ENCODE measurements at regions of chr16 and their contacts with region 1.

Region 1: GRCh38 chr16:15961060-15961511 is 11.7 kb downstream of the ABCC1 start:
- DNase-seq: peak; percentile 86 to 94 (median 89)
- H3K4me3 ChIP-seq: peak overlapping the region; percentile 33 to 55
- H3K4me3 Mint-ChIP-seq: peak overlapping the region; percentile 81 to 93 (median 88)
- H3K27ac ChIP-seq: peak overlapping the region; percentile 96
- H3K27ac Mint-ChIP-seq: peak overlapping the region; percentile 94 to 100 (median 99)
- H3K4me1 ChIP-seq: peaks cover 83% of the 10 kb centered on the region
- H3K4me1 Mint-ChIP-seq: peaks cover 56 to 86% (median 71%) of the 10 kb centered on the region in 4 donors
- H3K27me3 ChIP-seq: no peaks in the 10 kb centered on the region
- H3K27me3 Mint-ChIP-seq: no peaks in the 10 kb centered on the region

Region 2: GRCh38 chr16:15949210-15950160 is 11.6 kb before region 1 on chr16 and contains the start of gene ABCC1:
- CTCF ChIA-PET with region 1: interaction called, 7 read pairs
- POLR2A ChIA-PET with region 1: interaction called, 24 read pairs
- intact Hi-C with region 1: loop called (anchors 1 kb)
- DNase-seq: peak; percentile 49 to 78 (median 61)
- H3K4me3 ChIP-seq: peak within 1 kb of the TSS; percentile 76 to 92
- H3K4me3 Mint-ChIP-seq: peak within 1 kb of the TSS; percentile 94 to 98 (median 97)
- H3K27ac ChIP-seq: peak within 1 kb of the TSS; percentile 83
- H3K27ac Mint-ChIP-seq: peak within 1 kb of the TSS; percentile 94 to 100 (median 99)
- H3K4me1 ChIP-seq: peaks cover 46% of the 10 kb centered on the region
- H3K4me1 Mint-ChIP-seq: peaks cover 21 to 53% (median 39%) of the 10 kb centered on the region in 4 donors
- H3K27me3 ChIP-seq: no peaks in the 10 kb centered on the region
- H3K27me3 Mint-ChIP-seq: no peaks in the 10 kb centered on the region
- total RNA-seq, gene ABCC1: 57.3 to 69.9 TPM

Region 3: DNA sequence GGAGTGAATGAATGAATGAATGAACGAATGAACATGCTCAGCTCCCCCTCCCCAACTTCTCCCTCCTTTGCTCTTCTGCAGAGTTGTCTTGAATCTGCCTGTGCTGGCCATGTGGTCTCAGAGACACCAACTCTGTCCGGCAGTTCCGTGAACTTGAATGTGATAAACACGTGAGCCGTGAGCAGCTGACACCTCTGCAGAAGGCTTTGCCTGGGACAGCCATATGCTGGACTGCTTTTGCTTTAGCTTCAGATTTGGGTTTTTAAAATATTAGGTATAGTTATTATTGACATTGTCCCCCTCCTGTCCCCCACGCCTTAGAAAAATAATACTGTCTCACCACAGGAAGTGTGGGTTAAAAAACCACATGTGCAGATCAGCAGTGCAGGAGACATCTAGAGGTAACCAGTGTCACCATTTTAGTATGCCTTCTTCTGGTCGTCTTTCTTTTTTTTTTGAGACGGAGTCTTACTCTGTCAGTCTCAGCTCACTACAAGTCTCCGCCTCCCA is 72.2 kb after region 1 on chr16:
- CTCF ChIA-PET with region 1: no interaction called
- POLR2A ChIA-PET with region 1: interaction called, 3 read pairs
- intact Hi-C with region 1: loop called (anchors 2 kb)
- DNase-seq: peak; percentile 45 to 66 (median 57)
- H3K4me3 ChIP-seq: no peak overlapping the region
- H3K4me3 Mint-ChIP-seq: peak overlapping the region in 7 of 8 donors; percentile 59 to 72 (median 61)
- H3K27ac ChIP-seq: peak overlapping the region; percentile 3
- H3K27ac Mint-ChIP-seq: peak overlapping the region; percentile 76 to 91 (median 85)
- H3K4me1 ChIP-seq: peaks cover 29% of the 10 kb centered on the region
- H3K4me1 Mint-ChIP-seq: peaks cover 20 to 37% (median 28%) of the 10 kb centered on the region in 4 donors
- H3K27me3 ChIP-seq: no peaks in the 10 kb centered on the region
- H3K27me3 Mint-ChIP-seq: no peaks in the 10 kb centered on the region

Measured in CD4-positive, alpha-beta memory T cell (primary cell).